ENCODE measurements at regions of chr7 and their contacts with region 1.

Region 1: DNA sequence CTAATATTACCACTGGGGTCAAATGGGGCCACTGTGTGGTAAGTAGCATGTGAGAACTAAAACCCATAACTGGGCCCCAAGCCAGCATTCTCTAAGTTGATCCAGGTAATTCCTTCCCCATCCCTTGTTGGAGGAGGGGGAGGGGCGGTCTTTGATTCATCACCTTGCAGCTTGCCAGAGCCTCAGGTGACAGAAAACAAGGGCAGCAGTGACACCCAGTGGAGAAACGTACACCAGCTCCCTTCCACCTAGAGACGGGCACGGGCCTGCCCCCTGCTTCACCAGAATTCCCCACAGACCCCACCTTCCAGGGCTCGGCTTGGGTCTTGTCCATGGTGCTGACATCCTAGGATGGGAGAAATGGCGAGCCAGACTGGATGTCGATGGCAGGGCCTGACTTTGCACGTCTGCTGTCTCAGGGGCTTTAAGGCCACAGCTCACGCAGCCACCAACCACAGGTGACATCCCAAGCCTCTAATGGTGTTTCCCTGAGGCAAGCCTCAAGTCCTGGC is 102.0 kb downstream of the STRA8 start:
- DNase-seq: peak; percentile 71 to 77 (median 74)
- H3K4me3 ChIP-seq: no peak overlapping the region
- H3K27ac ChIP-seq: no peak overlapping the region
- H3K4me1 ChIP-seq: peaks cover 0 to 2% (median 0%) of the 10 kb centered on the region in 4 experiments
- H3K27me3 ChIP-seq: no peaks in the 10 kb centered on the region

Region 2: DNA sequence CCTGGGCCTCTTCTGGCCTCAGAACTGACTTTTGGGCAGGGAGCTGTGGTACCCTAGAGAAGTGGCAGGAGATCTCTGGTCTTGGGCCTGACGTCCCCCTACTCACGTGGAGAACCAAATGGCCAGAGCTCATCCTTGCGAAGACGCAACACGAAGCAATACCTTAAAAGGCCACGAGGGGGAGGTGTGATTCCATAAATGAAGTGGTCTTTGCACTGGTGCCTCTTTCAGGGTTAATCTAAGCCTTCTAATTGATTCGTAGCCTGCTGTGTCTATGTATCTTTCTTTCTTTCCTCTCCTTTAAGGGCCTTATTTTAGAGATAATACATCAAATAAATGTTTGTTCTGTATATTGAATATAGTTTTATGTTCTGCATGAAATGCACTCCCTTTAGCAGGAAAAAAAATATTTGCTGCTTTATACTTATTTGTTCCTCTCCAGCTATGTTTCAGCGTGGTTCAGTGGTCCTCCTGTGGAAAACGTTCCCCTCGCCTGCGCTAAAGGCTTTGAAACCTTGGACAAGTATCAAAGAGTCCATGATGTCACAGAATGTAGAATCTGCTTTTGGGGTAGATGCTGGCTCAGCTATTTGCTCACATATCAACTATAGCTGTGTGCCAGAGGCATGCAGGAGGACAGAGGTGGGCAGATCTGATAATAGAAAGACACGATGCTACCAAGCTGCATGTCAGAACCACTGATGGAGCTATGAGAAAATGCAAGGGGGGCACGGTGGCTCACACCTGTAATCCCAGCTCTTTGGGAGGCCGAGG is 61.0 kb before region 1 on chr7:
- CTCF ChIA-PET with region 1: interaction called, 95 read pairs
- POLR2A ChIA-PET with region 1: no interaction called
- DNase-seq: peak; percentile 76 to 88 (median 80)
- H3K4me3 ChIP-seq: no peak overlapping the region
- H3K27ac ChIP-seq: no peak overlapping the region
- H3K4me1 ChIP-seq: no peaks in the 10 kb centered on the region
- H3K27me3 ChIP-seq: peaks cover 0 to 5% (median 0%) of the 10 kb centered on the region in 5 experiments

Region 3: DNA sequence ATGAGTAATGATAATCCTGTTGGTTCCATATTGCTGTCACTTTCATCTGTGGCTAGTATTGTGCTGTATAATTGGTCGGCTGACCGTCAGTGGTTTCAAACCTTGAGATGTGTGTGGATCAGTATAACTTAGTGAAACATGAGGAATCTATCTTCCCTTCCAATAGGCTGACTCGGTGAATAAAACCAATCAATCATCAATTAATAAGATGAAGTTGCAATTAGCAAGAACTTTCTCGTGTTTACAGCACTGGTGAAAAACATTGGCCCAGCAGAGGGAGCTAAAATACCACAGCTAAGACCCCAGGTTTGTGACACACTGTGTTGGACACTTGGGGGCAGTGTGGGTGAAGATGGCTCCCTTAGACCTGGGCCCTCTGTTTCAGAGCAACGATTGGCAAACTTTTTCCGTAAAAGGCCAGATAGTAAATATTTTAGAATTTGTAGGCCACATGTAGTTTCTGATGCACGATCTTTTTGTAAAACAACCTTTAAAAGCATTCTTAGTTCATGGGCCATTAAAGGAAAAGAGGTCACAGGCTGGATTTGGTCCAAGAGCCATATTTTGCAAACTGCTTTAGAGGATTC is 54.2 kb before region 1 on chr7:
- CTCF ChIA-PET with region 1: interaction called, 95 read pairs
- POLR2A ChIA-PET with region 1: no interaction called
- DNase-seq: peak; percentile 89 to 94 (median 91)
- H3K4me3 ChIP-seq: no peak overlapping the region
- H3K27ac ChIP-seq: no peak overlapping the region
- H3K4me1 ChIP-seq: no peaks in the 10 kb centered on the region
- H3K27me3 ChIP-seq: peaks cover 0 to 2% (median 0%) of the 10 kb centered on the region in 5 experiments

Region 4: DNA sequence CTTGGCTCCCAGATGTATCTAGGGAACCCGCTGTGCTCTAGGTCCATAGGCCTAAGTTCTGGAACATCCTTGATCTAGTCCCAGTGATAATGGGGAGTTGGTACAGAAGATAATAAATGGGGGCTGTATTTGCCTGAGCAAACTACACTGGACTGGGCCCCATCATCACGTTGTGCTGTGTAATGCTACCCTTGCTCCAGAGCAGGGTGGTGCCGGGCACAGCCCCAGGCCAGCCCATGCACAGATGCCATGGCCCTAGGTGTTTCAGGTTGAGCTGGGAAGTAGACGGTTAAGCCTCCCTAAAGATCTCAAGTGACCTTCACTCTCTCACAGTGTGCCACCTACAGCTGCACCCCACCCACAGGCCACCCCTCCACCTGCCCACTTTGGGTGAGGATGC is 48.8 kb before region 1 on chr7:
- CTCF ChIA-PET with region 1: interaction called, 95 read pairs
- POLR2A ChIA-PET with region 1: no interaction called
- DNase-seq: no peak
- H3K4me3 ChIP-seq: no peak overlapping the region
- H3K27ac ChIP-seq: no peak overlapping the region
- H3K4me1 ChIP-seq: no peaks in the 10 kb centered on the region
- H3K27me3 ChIP-seq: no peaks in the 10 kb centered on the region

Region 5: GRCh38 chr7:135320277-135320676 is 15.4 kb before region 1 on chr7:
- CTCF ChIA-PET with region 1: interaction called, 12 read pairs
- POLR2A ChIA-PET with region 1: no interaction called
- DNase-seq: peak; percentile 31 to 55 (median 43)
- H3K4me3 ChIP-seq: no peak overlapping the region
- H3K27ac ChIP-seq: no peak overlapping the region
- H3K4me1 ChIP-seq: peaks cover 0 to 6% (median 2%) of the 10 kb centered on the region in 4 experiments
- H3K27me3 ChIP-seq: no peaks in the 10 kb centered on the region

Measured in common myeloid progenitor, CD34-positive (primary cell).